ENCODE measurements at regions of chr3 and their contacts with region 1.

Region 1: GRCh38 chr3:124559881-124560574 is 170.2 kb upstream of the UMPS start:
- DNase-seq: peak; percentile 64
- ATAC-seq: peak; percentile 86
- H3K4me3 ChIP-seq: no peak overlapping the region
- H3K27ac ChIP-seq: no peak overlapping the region
- H3K4me1 ChIP-seq: no peaks in the 10 kb centered on the region
- H3K27me3 ChIP-seq: peaks cover 21% of the 10 kb centered on the region
- CTCF ChIP-seq: peak; percentile 96

Region 2: GRCh38 chr3:124492811-124493210 is 67.2 kb before region 1 on chr3:
- CTCF ChIA-PET with region 1: no interaction called
- POLR2A ChIA-PET with region 1: no interaction called
- in situ Hi-C with region 1: no loop called
- intact Hi-C with region 1: loop called (anchors 10 kb)
- DNase-seq: no peak
- ATAC-seq: no peak
- H3K4me3 ChIP-seq: no peak overlapping the region
- H3K27ac ChIP-seq: no peak overlapping the region
- H3K4me1 ChIP-seq: no peaks in the 10 kb centered on the region
- H3K27me3 ChIP-seq: peaks cover 8% of the 10 kb centered on the region; the same call in 1 of the 2 replicates
- CTCF ChIP-seq: peak; percentile 48

Region 3: GRCh38 chr3:124688581-124689454 is 128.8 kb after region 1 on chr3:
- CTCF ChIA-PET with region 1: interaction called, 13 read pairs
- POLR2A ChIA-PET with region 1: no interaction called
- in situ Hi-C with region 1: no loop called
- intact Hi-C with region 1: loop called (anchors 1 kb)
- DNase-seq: peak; percentile 47
- ATAC-seq: peak; percentile 98
- H3K4me3 ChIP-seq: no peak overlapping the region
- H3K27ac ChIP-seq: no peak overlapping the region
- H3K4me1 ChIP-seq: peaks cover 3% of the 10 kb centered on the region; the same call in 1 of the 2 replicates
- H3K27me3 ChIP-seq: peaks cover 34% of the 10 kb centered on the region
- CTCF ChIP-seq: peak; percentile 96

Region 4: GRCh38 chr3:124905849-124906248 is 345.8 kb after region 1 on chr3:
- CTCF ChIA-PET with region 1: interaction called, 4 read pairs
- POLR2A ChIA-PET with region 1: no interaction called
- in situ Hi-C with region 1: no loop called
- intact Hi-C with region 1: loop called (anchors 10 kb)
- DNase-seq: no peak
- ATAC-seq: no peak; the same call in 1 of the 2 replicates
- H3K4me3 ChIP-seq: no peak overlapping the region
- H3K27ac ChIP-seq: no peak overlapping the region
- H3K4me1 ChIP-seq: no peaks in the 10 kb centered on the region; the same call in 1 of the 2 replicates
- H3K27me3 ChIP-seq: no peaks in the 10 kb centered on the region
- CTCF ChIP-seq: peak; percentile 27; the same call in 1 of the 2 replicates

Region 5: DNA sequence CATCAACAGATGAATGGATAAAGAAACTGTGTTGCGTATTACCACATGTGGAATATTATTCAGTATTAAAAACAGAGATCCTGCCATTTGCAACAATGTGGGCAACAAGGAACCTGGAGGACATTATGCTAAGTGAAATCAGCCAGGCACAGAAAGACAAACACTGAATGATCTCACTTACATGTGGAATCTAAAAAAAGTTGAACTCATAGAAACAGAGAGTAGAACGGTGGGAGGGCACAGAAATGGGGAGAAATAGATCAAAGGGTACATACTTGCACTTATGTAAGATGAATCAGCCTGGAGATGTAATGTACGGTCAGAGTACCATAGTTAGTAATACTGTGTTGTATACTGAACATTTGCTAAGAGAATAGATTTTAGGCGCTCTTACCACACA is 404.4 kb after region 1 on chr3:
- CTCF ChIA-PET with region 1: interaction called, 11 read pairs
- POLR2A ChIA-PET with region 1: no interaction called
- in situ Hi-C with region 1: no loop called
- intact Hi-C with region 1: no loop called
- DNase-seq: no peak
- ATAC-seq: no peak
- H3K4me3 ChIP-seq: no peak overlapping the region
- H3K27ac ChIP-seq: peak overlapping the region; percentile 5; the same call in 1 of the 2 replicates
- H3K4me1 ChIP-seq: peaks cover 11% of the 10 kb centered on the region
- H3K27me3 ChIP-seq: no peaks in the 10 kb centered on the region
- CTCF ChIP-seq: no peak

Measured in Panc1 (cell line).